B cell (primary cell): ENCODE measurements at regions of chr11 and their contacts with region 1.

Region 1: GRCh38 chr11:133872160-133872559 is 26.8 kb upstream of the SPATA19 start:
- DNase-seq: no peak
- ATAC-seq: no peak
- H3K4me3 ChIP-seq: no peak overlapping the region
- H3K4me3 Mint-ChIP-seq: no peak overlapping the region
- H3K27ac ChIP-seq: no peak overlapping the region
- H3K27ac Mint-ChIP-seq: no peak overlapping the region
- H3K4me1 ChIP-seq: no peaks in the 10 kb centered on the region
- H3K4me1 Mint-ChIP-seq: no peaks in the 10 kb centered on the region
- H3K27me3 ChIP-seq: no peaks in the 10 kb centered on the region
- H3K27me3 Mint-ChIP-seq: peaks cover 5% of the 10 kb centered on the region
- CTCF ChIP-seq: no peak

Region 2: DNA sequence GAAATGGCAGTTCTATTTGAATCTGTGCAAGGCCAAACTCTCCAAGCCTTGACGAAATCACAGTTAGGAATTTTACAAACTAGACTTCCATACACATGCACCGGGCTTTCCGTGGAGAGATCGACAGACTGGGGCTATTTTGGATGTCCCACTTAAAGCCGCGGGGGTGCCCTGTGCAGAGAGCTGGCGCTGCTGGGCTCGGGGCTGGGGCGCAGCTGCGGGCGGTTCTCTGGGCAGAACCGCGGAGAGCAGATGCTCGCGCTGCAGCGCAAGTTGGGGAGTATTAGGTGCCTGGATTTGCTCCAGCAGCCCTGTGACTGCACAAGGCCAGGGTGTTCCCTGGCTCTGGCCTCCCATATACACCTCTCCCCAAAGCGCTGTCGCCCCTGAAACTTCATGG is 94.0 kb before region 1 on chr11:
- CTCF ChIA-PET with region 1: no interaction called
- POLR2A ChIA-PET with region 1: no interaction called
- intact Hi-C with region 1: no loop called
- DNase-seq: no peak
- ATAC-seq: no peak
- H3K4me3 ChIP-seq: no peak overlapping the region
- H3K4me3 Mint-ChIP-seq: no peak overlapping the region
- H3K27ac ChIP-seq: no peak overlapping the region
- H3K27ac Mint-ChIP-seq: no peak overlapping the region
- H3K4me1 ChIP-seq: no peaks in the 10 kb centered on the region
- H3K4me1 Mint-ChIP-seq: no peaks in the 10 kb centered on the region
- H3K27me3 ChIP-seq: no peaks in the 10 kb centered on the region
- H3K27me3 Mint-ChIP-seq: no peaks in the 10 kb centered on the region
- CTCF ChIP-seq: no peak

Region 3: DNA sequence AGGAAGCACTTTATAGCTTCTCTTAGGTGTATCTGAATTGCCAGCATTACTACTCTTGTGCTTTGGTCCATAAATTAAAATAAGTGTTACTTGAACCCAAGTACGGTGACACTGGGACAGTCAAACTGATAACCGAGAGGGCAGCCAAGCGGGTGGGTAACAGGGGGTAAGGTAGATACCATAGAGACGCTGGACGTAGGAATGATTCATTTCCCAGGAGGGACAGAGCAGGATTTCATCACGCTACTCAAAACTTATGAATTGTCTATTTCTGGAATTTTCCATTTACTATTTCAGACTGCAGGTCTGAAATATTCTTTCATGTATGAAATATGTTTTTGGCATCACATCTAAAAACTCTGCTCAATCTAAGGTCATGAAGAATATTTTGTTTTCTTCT is 12.0 kb before region 1 on chr11:
- CTCF ChIA-PET with region 1: no interaction called
- POLR2A ChIA-PET with region 1: no interaction called
- intact Hi-C with region 1: loop called (anchors 1 kb)
- DNase-seq: no peak
- ATAC-seq: no peak
- H3K4me3 ChIP-seq: no peak overlapping the region
- H3K4me3 Mint-ChIP-seq: no peak overlapping the region
- H3K27ac ChIP-seq: no peak overlapping the region
- H3K27ac Mint-ChIP-seq: no peak overlapping the region
- H3K4me1 ChIP-seq: no peaks in the 10 kb centered on the region
- H3K4me1 Mint-ChIP-seq: no peaks in the 10 kb centered on the region
- H3K27me3 ChIP-seq: no peaks in the 10 kb centered on the region
- H3K27me3 Mint-ChIP-seq: peaks cover 20% of the 10 kb centered on the region
- CTCF ChIP-seq: no peak